ENCODE measurements at regions of chr9 and their contacts with region 1.

Region 1: GRCh38 chr9:104927912-104928740 is at the start of gene ABCA1:
- DNase-seq: peak; percentile 99
- H3K4me3 ChIP-seq: peak within 1 kb of the TSS; percentile 83 to 97 (median 94)
- H3K27ac ChIP-seq: peak within 1 kb of the TSS; percentile 89 to 98 (median 96)
- H3K4me1 ChIP-seq: peaks cover 0 to 41% (median 37%) of the 10 kb centered on the region in 4 donors
- H3K27me3 ChIP-seq: no peaks in the 10 kb centered on the region
- CTCF ChIP-seq: no peak
- EP300 ChIP-seq: no peak
- POLR2A ChIP-seq: peak; percentile 89 to 95
- total RNA-seq, gene ABCA1: 76.7 to 110 (median 91.3) TPM

Region 2: GRCh38 chr9:104868687-104869404 is 59.3 kb before region 1 on chr9:
- intact Hi-C with region 1: loop called (anchors 5 kb)
- DNase-seq: peak; percentile 88
- H3K4me3 ChIP-seq: no peak overlapping the region
- H3K27ac ChIP-seq: peak overlapping the region; percentile 51 to 85 (median 80)
- H3K4me1 ChIP-seq: peaks cover 0 to 94% (median 91%) of the 10 kb centered on the region in 4 donors
- H3K27me3 ChIP-seq: no peaks in the 10 kb centered on the region
- CTCF ChIP-seq: no peak
- EP300 ChIP-seq: peak in 2 of 4 donors; percentile 33 to 49
- POLR2A ChIP-seq: no peak

Region 3: GRCh38 chr9:104991144-104991953 is 63.2 kb after region 1 on chr9:
- intact Hi-C with region 1: loop called (anchors 1 kb)
- DNase-seq: peak; percentile 99
- H3K4me3 ChIP-seq: peak overlapping the region; percentile 49 to 61 (median 57)
- H3K27ac ChIP-seq: peak overlapping the region; percentile 91 to 97 (median 96)
- H3K4me1 ChIP-seq: peaks cover 0 to 43% (median 40%) of the 10 kb centered on the region in 4 donors
- H3K27me3 ChIP-seq: no peaks in the 10 kb centered on the region
- CTCF ChIP-seq: no peak
- EP300 ChIP-seq: peak; percentile 67 to 90 (median 83)
- POLR2A ChIP-seq: peak in 1 of 2 donors; percentile 37

Region 4: GRCh38 chr9:105157130-105157583 is 229.0 kb after region 1 on chr9:
- intact Hi-C with region 1: loop called (anchors 2 kb)
- DNase-seq: peak; percentile 95
- H3K4me3 ChIP-seq: no peak overlapping the region
- H3K27ac ChIP-seq: peak overlapping the region; percentile 56 to 79 (median 70)
- H3K4me1 ChIP-seq: peaks cover 0 to 18% (median 16%) of the 10 kb centered on the region in 4 donors
- H3K27me3 ChIP-seq: no peaks in the 10 kb centered on the region
- CTCF ChIP-seq: peak in 3 of 4 experiments; percentile 36 to 58 (median 36)
- EP300 ChIP-seq: peak; percentile 27 to 93 (median 83)
- POLR2A ChIP-seq: no peak

Region 5: GRCh38 chr9:105414947-105415661 is 487.0 kb after region 1 on chr9:
- intact Hi-C with region 1: loop called (anchors 2 kb)
- DNase-seq: peak; percentile 75
- H3K4me3 ChIP-seq: no peak overlapping the region
- H3K27ac ChIP-seq: no peak overlapping the region
- H3K4me1 ChIP-seq: peaks cover 0 to 7% (median 4%) of the 10 kb centered on the region in 4 donors
- H3K27me3 ChIP-seq: no peaks in the 10 kb centered on the region
- CTCF ChIP-seq: peak; percentile 70 to 90 (median 87)
- EP300 ChIP-seq: no peak
- POLR2A ChIP-seq: no peak

Measured in sigmoid colon (tissue), 7 donors.